Right ventricle myocardium superior (tissue), 1 donor: ENCODE measurements at regions of chr21 and their contacts with region 1.

Region 1: GRCh38 chr21:26842976-26843932 is 2.0 kb downstream of the ADAMTS1 start:
- DNase-seq: peak; percentile 96
- ATAC-seq: peak; percentile 60

Region 2: GRCh38 chr21:26506956-26507355 is 336.3 kb before region 1 on chr21:
- intact Hi-C with region 1: no loop called
- DNase-seq: no peak
- ATAC-seq: no peak

Region 3: GRCh38 chr21:26769613-26770188 is 73.6 kb before region 1 on chr21:
- intact Hi-C with region 1: loop called (anchors 5 kb)
- DNase-seq: no peak
- ATAC-seq: no peak

Region 4: GRCh38 chr21:26795866-26796329 is 47.4 kb before region 1 on chr21:
- intact Hi-C with region 1: no loop called
- DNase-seq: peak; percentile 52
- ATAC-seq: peak; percentile 95

Region 5: GRCh38 chr21:27261676-27262075 is 418.4 kb after region 1 on chr21:
- intact Hi-C with region 1: no loop called
- DNase-seq: no peak
- ATAC-seq: no peak

Region 6: DNA sequence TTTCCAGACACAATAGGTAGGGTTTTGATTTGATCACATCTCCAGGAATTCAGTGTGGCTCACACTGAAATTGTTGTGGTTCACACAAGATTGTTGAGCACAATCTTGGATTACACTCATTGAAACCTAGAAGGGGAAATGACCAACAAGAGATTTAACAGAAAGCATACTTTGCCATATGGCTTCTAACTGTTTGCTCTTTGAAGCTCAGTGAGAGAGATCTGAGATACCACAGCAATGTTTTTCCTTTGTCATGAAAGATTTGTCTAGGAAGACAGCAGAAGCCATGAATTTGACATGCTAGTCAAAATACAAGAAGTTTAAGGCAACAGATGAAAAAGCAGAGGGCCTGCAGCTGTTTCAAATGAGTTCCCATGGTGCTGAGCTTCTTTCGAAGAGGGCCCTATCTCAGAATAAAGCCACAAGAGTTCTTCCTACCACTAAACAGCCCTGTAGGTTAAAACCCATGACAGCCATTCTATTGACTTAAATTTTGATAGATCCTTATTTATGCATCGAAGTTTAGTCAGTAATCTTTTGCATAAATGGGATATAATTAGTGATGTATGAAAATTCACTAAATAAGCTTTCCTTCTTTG is 1499.1 kb after region 1 on chr21:
- intact Hi-C with region 1: loop called (anchors 5 kb)
- DNase-seq: no peak
- ATAC-seq: no peak